Left colon (tissue), 2 donors: ENCODE measurements at regions of chr15 and their contacts with region 1.

Region 1: GRCh38 chr15:95259513-95259912 is 1028.2 kb downstream of the MCTP2 start:
- DNase-seq: peak; percentile 34 to 46
- ATAC-seq: peak; percentile 52

Region 2: DNA sequence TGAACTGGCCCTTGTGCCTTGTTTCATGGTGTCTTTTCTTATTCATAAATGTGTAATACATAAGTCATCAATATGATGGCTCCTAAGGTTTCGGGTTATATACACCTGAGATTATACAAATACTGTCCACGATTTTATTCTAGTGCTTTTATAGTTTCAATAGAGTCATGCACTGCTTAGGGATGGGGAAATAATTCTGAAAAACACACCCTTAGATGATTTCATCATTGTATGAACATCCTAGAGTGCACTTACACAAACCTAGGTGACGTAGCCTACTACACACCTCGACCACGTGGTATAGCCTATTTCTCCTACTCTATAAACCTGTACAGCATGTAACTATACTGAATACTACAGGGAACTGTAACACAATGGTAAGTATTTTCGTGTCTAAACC is 82.2 kb after region 1 on chr15:
- intact Hi-C with region 1: no loop called
- DNase-seq: no peak
- ATAC-seq: no peak

Region 3: DNA sequence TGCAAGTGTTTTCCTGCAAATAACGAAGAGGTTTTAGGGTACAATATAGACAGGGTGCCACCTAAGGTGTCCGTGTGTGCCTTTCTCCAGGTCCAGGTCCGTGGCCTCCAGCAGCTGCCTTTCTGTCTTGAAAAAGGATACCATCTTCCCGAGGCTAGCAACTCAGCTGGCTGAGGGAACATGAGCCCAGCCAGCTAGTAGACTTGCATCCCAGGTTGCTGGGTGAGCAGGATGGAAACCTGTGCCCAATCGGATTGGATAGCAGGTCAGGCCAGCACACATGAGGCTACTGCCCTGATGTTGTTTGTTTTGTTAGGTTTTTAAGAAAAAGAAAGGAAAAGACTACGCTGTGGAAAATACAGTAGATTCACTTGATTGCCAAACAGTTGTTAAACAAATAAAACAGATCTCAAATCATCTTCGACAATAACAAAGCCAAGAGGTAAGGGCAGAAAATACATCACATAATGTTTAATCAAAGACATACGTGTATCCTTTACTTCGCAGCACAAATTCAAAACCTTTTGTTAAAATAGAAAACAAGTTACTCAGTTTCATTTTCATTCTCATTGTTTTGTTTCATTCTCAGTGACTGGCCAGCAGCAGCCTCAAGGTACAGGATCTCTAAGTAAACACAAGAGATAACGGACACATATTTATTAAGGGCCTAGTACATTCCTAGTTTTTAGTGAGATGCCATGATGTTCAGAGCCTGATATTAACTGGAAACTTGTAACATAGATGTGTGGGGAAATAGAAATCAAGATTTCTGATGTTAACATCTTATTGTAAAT is 409.8 kb after region 1 on chr15:
- intact Hi-C with region 1: no loop called
- DNase-seq: no peak
- ATAC-seq: no peak

Region 4: GRCh38 chr15:96327155-96327741 is 1067.7 kb after region 1 on chr15:
- intact Hi-C with region 1: loop called in 1 of 2 experiments (anchors 10 kb)
- DNase-seq: no peak
- ATAC-seq: peak; percentile 52

Region 5: DNA sequence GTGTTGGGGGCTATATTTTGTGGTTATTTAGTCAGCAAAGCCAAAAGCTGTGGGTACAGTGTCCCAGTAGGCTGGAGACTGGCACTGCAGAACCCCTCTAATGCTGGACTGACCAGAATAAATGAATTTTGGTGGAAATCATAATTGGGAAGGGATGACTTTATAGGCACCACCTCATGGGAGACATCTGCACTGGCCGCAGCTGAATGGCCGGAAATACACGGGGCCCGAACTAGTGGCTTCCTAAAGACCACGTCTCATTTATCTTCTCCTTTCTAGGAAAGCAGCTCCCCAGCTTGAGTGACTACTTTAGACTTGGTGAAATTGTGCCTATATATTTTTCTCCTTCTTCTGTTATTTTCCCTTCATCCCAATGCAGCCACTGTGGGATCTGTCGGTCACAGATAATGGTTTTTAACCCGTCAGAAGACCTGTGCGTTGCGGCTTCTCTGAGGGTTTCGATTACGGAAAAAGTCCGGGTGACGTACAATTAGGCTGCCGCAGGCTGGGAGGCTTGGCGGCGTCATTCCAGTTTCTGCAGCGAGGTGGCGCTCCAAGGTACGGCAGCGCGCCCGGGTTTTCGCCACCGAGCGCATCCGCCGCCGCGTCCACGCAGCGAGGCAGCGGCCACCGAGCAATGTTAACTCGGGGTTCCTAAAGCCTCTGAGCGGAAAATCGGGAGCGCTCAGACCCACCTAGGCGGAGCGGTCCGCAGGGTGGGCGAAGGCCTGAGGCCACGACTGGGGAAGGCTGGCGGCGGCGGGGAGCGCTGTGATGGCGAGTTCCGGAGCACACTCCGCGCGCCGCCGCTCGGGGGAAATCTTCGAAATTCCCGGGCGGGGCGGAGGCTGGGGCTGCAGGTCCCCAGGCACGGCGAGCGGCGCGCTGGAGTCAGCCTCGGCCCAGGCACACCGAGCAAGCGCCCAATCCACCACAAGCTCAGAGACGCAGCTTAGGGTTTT is 1097.3 kb after region 1 on chr15:
- intact Hi-C with region 1: loop called in 1 of 2 experiments (anchors 10 kb)
- DNase-seq: peak; percentile 54 to 84
- ATAC-seq: peak; percentile 81

Region 6: DNA sequence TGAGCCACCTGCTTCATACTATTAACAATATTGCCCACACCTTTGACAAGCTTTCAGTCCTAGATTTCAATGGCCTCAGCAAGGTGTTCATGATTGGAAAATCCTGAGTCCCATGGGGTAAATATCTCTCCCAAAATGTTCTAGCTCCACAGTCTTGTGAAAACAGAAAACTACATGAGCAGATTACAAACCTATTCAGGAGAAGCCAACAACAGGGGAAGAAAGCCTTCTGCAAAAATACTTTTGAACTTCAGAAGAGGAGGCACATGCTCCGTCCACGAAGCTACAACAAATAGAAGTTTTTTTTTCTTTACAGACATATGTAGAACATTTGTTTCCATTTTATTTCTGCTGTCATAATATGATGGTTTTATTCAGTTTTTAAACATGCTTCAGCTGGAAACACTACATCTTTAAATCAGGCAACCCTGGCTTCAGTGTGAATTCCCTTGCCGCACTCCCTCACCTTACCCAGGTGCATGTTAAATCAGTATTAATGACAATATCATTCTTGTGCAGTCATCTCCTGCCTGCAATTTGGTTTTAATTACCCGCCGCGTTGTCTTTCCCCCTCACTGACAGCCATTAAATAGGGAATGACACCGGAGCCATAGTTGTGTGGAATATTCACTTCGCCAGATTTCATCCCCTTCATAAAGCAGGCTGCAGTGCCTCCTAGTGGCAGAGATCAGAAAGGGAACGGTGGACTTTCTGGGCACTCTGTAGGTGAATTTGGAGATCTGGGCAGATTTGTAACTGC is 1975.5 kb after region 1 on chr15:
- intact Hi-C with region 1: loop called in 1 of 2 experiments (anchors 10 kb)
- DNase-seq: peak in 1 of 2 donors; percentile 47
- ATAC-seq: peak; percentile 63